ENCODE measurements at regions of chr7 and their contacts with region 1.

Region 1: GRCh38 chr7:117405519-117405918 is 21.8 kb downstream of the ASZ1 start:
- DNase-seq: no peak
- ATAC-seq: no peak
- H3K4me3 ChIP-seq: no peak overlapping the region
- H3K4me3 Mint-ChIP-seq: no peak overlapping the region
- H3K27ac ChIP-seq: no peak overlapping the region
- H3K27ac Mint-ChIP-seq: no peak overlapping the region
- H3K4me1 ChIP-seq: no peaks in the 10 kb centered on the region
- H3K4me1 Mint-ChIP-seq: no peaks in the 10 kb centered on the region
- H3K27me3 ChIP-seq: no peaks in the 10 kb centered on the region
- H3K27me3 Mint-ChIP-seq: no peaks in the 10 kb centered on the region
- CTCF ChIP-seq: no peak

Region 2: GRCh38 chr7:117230276-117231046 is 175.1 kb before region 1 on chr7:
- intact Hi-C with region 1: no loop called
- DNase-seq: no peak
- ATAC-seq: no peak
- H3K4me3 ChIP-seq: no peak overlapping the region
- H3K4me3 Mint-ChIP-seq: no peak overlapping the region
- H3K27ac ChIP-seq: no peak overlapping the region
- H3K27ac Mint-ChIP-seq: no peak overlapping the region
- H3K4me1 ChIP-seq: no peaks in the 10 kb centered on the region
- H3K4me1 Mint-ChIP-seq: no peaks in the 10 kb centered on the region
- H3K27me3 ChIP-seq: no peaks in the 10 kb centered on the region
- H3K27me3 Mint-ChIP-seq: no peaks in the 10 kb centered on the region
- CTCF ChIP-seq: no peak

Region 3: DNA sequence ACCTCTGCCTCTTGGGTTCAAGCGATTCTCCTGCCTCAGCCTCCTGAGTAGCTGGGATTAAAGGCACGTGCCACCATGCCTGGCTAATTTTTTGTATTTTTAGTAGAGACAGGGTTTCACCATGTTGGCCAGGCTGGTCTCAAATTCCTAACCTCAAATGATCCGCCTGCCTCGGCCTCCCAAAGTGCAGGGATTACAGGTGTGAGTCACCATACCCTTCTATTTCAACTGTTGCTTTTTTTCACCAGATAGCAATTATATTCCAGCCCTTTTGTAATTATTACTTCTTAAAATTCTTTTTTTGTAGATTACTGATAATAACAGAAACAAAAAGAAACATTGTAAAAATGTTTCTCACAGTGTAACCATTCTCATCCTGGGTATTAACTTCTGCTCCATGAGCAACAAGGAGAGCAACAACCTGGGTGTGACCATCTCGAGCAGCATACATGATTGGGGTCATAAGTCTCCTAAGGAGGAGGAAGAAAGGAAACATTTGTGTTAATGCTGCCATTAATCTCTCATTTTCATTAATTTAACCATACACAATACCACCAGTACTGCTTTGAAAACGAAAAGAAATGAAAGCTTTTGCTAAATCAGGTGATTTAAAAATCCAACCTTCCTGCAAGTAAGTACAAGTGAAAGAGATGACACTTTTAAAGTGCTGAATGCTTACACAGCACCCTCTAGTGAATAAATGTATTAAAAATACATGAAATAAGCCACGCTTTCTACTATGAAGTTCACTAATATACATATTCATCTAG is 20.0 kb before region 1 on chr7:
- intact Hi-C with region 1: no loop called
- DNase-seq: no peak
- ATAC-seq: no peak
- H3K4me3 ChIP-seq: no peak overlapping the region
- H3K4me3 Mint-ChIP-seq: no peak overlapping the region
- H3K27ac ChIP-seq: no peak overlapping the region
- H3K27ac Mint-ChIP-seq: no peak overlapping the region
- H3K4me1 ChIP-seq: no peaks in the 10 kb centered on the region
- H3K4me1 Mint-ChIP-seq: no peaks in the 10 kb centered on the region
- H3K27me3 ChIP-seq: no peaks in the 10 kb centered on the region
- H3K27me3 Mint-ChIP-seq: no peaks in the 10 kb centered on the region
- CTCF ChIP-seq: no peak

Region 4: GRCh38 chr7:117458977-117459583 is 53.6 kb after region 1 on chr7:
- intact Hi-C with region 1: loop called (anchors 5 kb)
- DNase-seq: peak in 1 of 2 donors; percentile 5
- ATAC-seq: no peak
- H3K4me3 ChIP-seq: no peak overlapping the region
- H3K4me3 Mint-ChIP-seq: no peak overlapping the region
- H3K27ac ChIP-seq: no peak overlapping the region
- H3K27ac Mint-ChIP-seq: no peak overlapping the region
- H3K4me1 ChIP-seq: no peaks in the 10 kb centered on the region
- H3K4me1 Mint-ChIP-seq: no peaks in the 10 kb centered on the region
- H3K27me3 ChIP-seq: no peaks in the 10 kb centered on the region
- H3K27me3 Mint-ChIP-seq: no peaks in the 10 kb centered on the region
- CTCF ChIP-seq: no peak

Region 5: DNA sequence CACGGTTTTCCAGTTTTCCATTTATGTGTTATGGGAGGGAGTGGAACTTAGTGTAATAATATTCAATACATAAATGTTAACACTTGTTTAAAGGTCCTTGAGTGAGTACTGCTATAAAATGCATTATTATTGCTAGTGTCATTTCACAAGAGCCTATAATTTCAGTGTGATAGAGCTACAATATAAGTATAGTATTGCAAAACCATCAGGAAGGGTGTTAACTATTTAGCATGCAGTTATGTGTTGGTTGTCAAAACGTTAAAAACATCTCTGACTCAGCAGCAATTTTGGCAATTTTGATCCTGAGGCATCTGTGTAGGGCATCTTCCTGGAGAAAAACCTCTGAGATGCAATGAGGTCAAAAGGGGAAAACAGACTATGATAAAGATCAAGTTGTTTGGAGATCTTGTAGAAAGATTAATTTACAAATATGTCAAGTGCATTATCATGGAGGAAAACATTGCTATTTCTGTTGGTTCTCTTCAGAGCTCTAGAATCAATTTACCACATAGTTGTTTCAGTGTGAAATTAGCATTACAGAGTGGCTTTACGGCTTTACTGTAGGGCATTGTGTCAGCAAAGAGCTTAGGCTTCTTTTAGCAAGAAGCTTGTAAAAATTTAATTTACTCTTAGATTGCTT is 79.6 kb after region 1 on chr7:
- intact Hi-C with region 1: no loop called
- DNase-seq: no peak
- ATAC-seq: no peak
- H3K4me3 ChIP-seq: no peak overlapping the region
- H3K4me3 Mint-ChIP-seq: no peak overlapping the region
- H3K27ac ChIP-seq: no peak overlapping the region
- H3K27ac Mint-ChIP-seq: no peak overlapping the region
- H3K4me1 ChIP-seq: no peaks in the 10 kb centered on the region
- H3K4me1 Mint-ChIP-seq: no peaks in the 10 kb centered on the region
- H3K27me3 ChIP-seq: peaks cover 2% of the 10 kb centered on the region
- H3K27me3 Mint-ChIP-seq: peaks cover under 1 to 3% of the 10 kb centered on the region in 2 donors
- CTCF ChIP-seq: no peak

Region 6: DNA sequence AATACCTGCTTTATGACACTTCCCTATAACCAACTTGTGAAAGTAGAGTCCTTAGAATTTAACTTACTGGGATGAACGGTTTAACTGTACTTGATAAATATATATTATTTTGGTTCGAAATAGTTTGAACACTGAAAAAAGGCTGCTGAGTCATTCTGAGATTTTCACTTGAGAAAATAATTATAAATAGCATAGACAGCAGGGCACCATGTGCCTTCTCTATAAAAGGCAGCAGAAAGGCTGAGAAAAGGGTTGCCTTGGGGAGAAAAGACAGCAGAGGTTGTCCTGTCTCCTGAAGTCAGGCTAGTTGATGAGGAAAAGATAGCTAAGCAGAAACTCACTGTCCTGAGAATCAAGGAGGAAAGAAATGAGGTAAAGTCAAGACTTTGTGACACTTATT is 375.3 kb after region 1 on chr7:
- intact Hi-C with region 1: no loop called
- DNase-seq: no peak
- ATAC-seq: no peak
- H3K4me3 ChIP-seq: no peak overlapping the region
- H3K4me3 Mint-ChIP-seq: no peak overlapping the region
- H3K27ac ChIP-seq: no peak overlapping the region
- H3K27ac Mint-ChIP-seq: no peak overlapping the region
- H3K4me1 ChIP-seq: no peaks in the 10 kb centered on the region
- H3K4me1 Mint-ChIP-seq: no peaks in the 10 kb centered on the region
- H3K27me3 ChIP-seq: no peaks in the 10 kb centered on the region
- H3K27me3 Mint-ChIP-seq: no peaks in the 10 kb centered on the region
- CTCF ChIP-seq: no peak